ENCODE measurements at regions of chr14 and their contacts with region 1.

Region 1: GRCh38 chr14:72104011-72104613 is 171.9 kb downstream of the RGS6 start:
- DNase-seq: peak; percentile 21 to 89
- H3K4me3 ChIP-seq: no peak overlapping the region
- H3K27ac ChIP-seq: no peak overlapping the region
- H3K4me1 ChIP-seq: no peaks in the 10 kb centered on the region
- H3K27me3 ChIP-seq: no peaks in the 10 kb centered on the region
- CTCF ChIP-seq: peak; percentile 79 to 87 (median 81)
- EP300 ChIP-seq: no peak
- POLR2A ChIP-seq: no peak
- RAD21 ChIP-seq: peak; percentile 63 to 74

Region 2: GRCh38 chr14:72075649-72076334 is 28.3 kb before region 1 on chr14:
- CTCF ChIA-PET with region 1: interaction called, 13 read pairs
- POLR2A ChIA-PET with region 1: no interaction called
- DNase-seq: peak in 1 of 2 experiments; percentile 23
- H3K4me3 ChIP-seq: peak overlapping the region in 1 of 4 experiments; percentile 20; a peak in 1 of 8 replicates
- H3K27ac ChIP-seq: no peak overlapping the region
- H3K4me1 ChIP-seq: no peaks in the 10 kb centered on the region; a peak in 1 of 7 replicates
- H3K27me3 ChIP-seq: no peaks in the 10 kb centered on the region
- CTCF ChIP-seq: peak in 2 of 3 experiments; percentile 1 to 14; a peak in 2 of 4 replicates
- EP300 ChIP-seq: 0 out of 3 replicates have a peak, but pooled peaks of 1 of the 2 experiments have one; percentile 34
- POLR2A ChIP-seq: no peak
- RAD21 ChIP-seq: peak; percentile 22 to 33; a peak in 1 of 4 replicates

Region 3: GRCh38 chr14:72115964-72116363 is 11.9 kb after region 1 on chr14:
- CTCF ChIA-PET with region 1: interaction called, 12 read pairs
- POLR2A ChIA-PET with region 1: no interaction called
- DNase-seq: no peak
- H3K4me3 ChIP-seq: no peak overlapping the region
- H3K27ac ChIP-seq: no peak overlapping the region
- H3K4me1 ChIP-seq: no peaks in the 10 kb centered on the region
- H3K27me3 ChIP-seq: no peaks in the 10 kb centered on the region
- CTCF ChIP-seq: no peak
- EP300 ChIP-seq: no peak
- POLR2A ChIP-seq: no peak
- RAD21 ChIP-seq: no peak

Measured in H1 (cell line).